ENCODE measurements at regions of chr17 and their contacts with region 1.

Region 1: GRCh38 chr17:42577532-42578281 is at the start of gene PSMC3IP:
- DNase-seq: peak; percentile 92
- ATAC-seq: peak; percentile 88
- H3K4me3 Mint-ChIP-seq: peak within 1 kb of the TSS; percentile 97
- H3K27ac Mint-ChIP-seq: peak within 1 kb of the TSS; percentile 95
- H3K4me1 Mint-ChIP-seq: peaks cover 26% of the 10 kb centered on the region
- H3K27me3 Mint-ChIP-seq: no peaks in the 10 kb centered on the region
- total RNA-seq, gene PSMC3IP: 15.9 to 16.9 TPM

Region 2: GRCh38 chr17:42484304-42484703 is 93.4 kb before region 1 on chr17:
- POLR2A ChIA-PET with region 1: no interaction called
- DNase-seq: peak; percentile 64
- ATAC-seq: peak; percentile 97
- H3K4me3 Mint-ChIP-seq: peak overlapping the region; percentile 75
- H3K27ac Mint-ChIP-seq: peak overlapping the region; percentile 49
- H3K4me1 Mint-ChIP-seq: peaks cover 19% of the 10 kb centered on the region
- H3K27me3 Mint-ChIP-seq: peaks cover 3% of the 10 kb centered on the region

Region 3: DNA sequence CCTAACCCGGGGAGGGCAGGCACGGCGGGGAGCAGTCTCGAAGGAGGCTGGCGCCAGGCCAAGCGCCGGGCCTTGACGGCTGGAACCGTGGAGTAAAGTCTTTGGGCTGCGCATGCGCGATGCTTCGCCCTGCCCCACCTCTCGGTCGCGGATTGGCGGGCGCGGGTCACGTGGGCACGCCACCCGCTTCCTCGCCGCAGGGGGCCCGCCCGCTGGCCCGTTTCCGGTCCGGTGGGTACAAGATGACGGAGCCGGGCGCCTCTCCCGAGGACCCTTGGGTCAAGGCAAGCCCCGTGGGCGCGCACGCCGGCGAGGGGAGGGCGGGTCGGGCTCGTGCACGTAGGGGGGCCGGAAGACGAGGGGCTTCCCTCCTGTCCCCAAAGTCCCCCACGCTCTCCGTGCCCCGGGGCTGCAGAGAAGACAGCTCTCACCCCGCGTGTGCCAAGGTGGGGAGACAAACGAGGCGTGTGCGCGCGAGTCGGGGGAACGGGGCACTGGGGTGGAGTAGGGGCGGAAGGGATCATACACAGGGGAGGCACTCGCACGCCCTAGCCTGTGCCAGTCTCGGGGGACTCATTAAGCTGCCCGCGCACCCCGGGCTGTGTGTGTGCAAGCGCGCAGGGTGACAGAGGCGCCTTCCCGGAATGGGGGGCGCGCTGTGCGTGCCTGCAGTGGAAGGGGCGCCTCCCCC is 10.7 kb before region 1 on chr17 and contains the start of gene MLX:
- POLR2A ChIA-PET with region 1: interaction called, 56 read pairs
- DNase-seq: peak; percentile 96
- ATAC-seq: peak; percentile 74
- H3K4me3 Mint-ChIP-seq: peak within 1 kb of the TSS; percentile 97
- H3K27ac Mint-ChIP-seq: peak within 1 kb of the TSS; percentile 98
- H3K4me1 Mint-ChIP-seq: peaks cover 35% of the 10 kb centered on the region
- H3K27me3 Mint-ChIP-seq: no peaks in the 10 kb centered on the region
- total RNA-seq, gene MLX: 62.9 to 64.9 TPM

Region 4: DNA sequence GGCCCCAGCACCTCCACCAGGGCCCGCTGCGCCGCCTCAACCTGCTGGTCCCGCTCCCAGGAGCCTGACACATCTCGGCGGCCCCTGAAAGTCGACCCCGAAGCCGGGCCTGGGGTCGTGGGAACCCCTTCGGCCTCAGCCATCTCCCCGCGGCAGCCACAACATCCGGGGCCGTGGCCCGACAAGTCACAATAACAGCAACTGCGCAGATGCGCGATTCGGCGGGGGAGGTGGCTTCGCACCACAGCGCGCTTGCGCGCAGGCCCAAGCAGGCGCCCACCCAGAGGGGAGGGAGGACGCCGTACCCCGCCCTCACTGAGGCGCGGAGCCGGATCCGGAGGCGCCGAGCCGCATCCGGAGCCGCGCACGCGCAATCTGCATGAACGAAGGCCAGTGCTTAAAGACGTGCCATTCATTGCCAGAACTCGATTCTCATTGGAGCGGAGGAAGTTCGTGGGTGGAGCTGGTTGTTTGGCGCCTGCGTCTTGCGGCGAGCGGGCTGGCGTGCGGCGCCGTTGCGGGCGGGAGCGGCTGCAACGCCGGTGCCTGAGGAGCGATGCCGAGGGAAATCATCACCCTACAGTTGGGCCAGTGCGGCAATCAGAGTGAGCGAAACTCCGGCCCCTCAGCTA is 31.6 kb after region 1 on chr17 and contains the starts of genes RETREG3 and TUBG1:
- POLR2A ChIA-PET with region 1: interaction called, 24 read pairs
- DNase-seq: peak; percentile 99
- ATAC-seq: peak; percentile 93
- H3K4me3 Mint-ChIP-seq: peak within 1 kb of the TSS; percentile 98
- H3K27ac Mint-ChIP-seq: peak within 1 kb of the TSS; percentile 94
- H3K4me1 Mint-ChIP-seq: peaks cover 34% of the 10 kb centered on the region
- H3K27me3 Mint-ChIP-seq: no peaks in the 10 kb centered on the region
- total RNA-seq, gene RETREG3: 82.2 to 82.3 TPM
- total RNA-seq, gene TUBG1: 55.6 to 57.6 TPM

Region 5: DNA sequence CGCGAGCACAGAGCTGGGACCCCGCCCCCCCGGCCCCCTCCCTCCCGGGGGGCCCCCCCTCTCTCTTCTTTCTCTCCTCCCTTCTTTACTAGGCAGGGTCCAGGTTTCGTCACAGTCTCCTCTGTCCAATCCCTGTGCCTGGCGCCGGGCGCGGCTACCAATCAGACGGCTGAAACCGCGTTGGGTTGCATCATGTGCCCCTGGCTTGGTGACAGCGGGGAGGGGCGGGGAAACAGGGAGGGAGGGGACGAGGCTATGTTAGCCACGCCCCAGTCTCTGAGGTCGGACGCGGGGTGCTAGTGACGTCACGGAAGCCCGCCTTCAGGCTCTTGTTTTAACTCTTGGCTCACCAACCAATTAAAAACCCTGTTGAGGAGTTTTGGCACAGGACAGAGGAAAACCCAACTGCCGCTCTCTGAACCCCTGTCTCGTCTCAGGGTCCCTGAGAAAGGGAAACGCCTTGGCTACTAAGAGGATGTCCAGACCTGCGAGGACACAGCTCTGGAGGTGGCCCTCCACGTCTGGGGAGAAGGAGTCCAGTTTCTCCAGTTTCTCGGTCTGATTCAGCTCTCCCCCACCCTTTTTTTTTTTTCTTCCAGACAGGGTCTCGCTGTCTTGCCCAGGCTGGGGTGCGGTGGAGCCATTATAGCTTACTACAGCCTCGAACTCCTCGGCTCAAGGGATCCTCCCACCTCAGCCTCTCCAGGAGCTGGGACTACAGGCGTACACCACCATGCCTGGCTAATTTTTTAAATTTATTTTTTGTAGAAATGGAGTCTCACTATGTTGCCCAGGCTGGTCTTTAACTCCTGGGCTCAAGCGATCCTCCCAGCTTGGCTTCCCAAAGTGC is 99.5 kb after region 1 on chr17:
- POLR2A ChIA-PET with region 1: interaction called, 40 read pairs
- DNase-seq: peak; percentile 94
- ATAC-seq: peak; percentile 84
- H3K4me3 Mint-ChIP-seq: peak overlapping the region; percentile 93
- H3K27ac Mint-ChIP-seq: peak overlapping the region; percentile 67
- H3K4me1 Mint-ChIP-seq: peaks cover 45% of the 10 kb centered on the region
- H3K27me3 Mint-ChIP-seq: peaks cover 46% of the 10 kb centered on the region

Measured in activated naive CD8-positive, alpha-beta T cell treated with anti-CD3 and anti-CD28 coated beads, Interleukin-2, amount 10 ng/mL, durations not matched to agents 7 days and 5 days (primary cell).